Ascending aorta (tissue), 2 donors: ENCODE measurements at regions of chr10 and their contacts with region 1.

Region 1: GRCh38 chr10:46228563-46229071 is 58.2 kb upstream of the ANTXRL start:
- DNase-seq: peak in 1 of 2 donors; percentile 81
- H3K4me3 ChIP-seq: no peak overlapping the region
- H3K27ac ChIP-seq: no peak overlapping the region
- H3K4me1 ChIP-seq: no peaks in the 10 kb centered on the region
- H3K27me3 ChIP-seq: no peaks in the 10 kb centered on the region
- CTCF ChIP-seq: peak; percentile 84 to 94 (median 93)

Region 2: GRCh38 chr10:46175296-46175695 is 53.3 kb before region 1 on chr10:
- intact Hi-C with region 1: no loop called
- DNase-seq: no peak
- H3K4me3 ChIP-seq: no peak overlapping the region
- H3K27ac ChIP-seq: no peak overlapping the region
- H3K4me1 ChIP-seq: no peaks in the 10 kb centered on the region
- H3K27me3 ChIP-seq: no peaks in the 10 kb centered on the region
- CTCF ChIP-seq: no peak

Region 3: GRCh38 chr10:46325023-46325422 is 96.4 kb after region 1 on chr10:
- intact Hi-C with region 1: loop called (anchors 1 kb)
- DNase-seq: no peak
- H3K4me3 ChIP-seq: no peak overlapping the region
- H3K27ac ChIP-seq: peak overlapping the region in 1 of 2 donors; percentile 26
- H3K4me1 ChIP-seq: peaks cover 0 to 8% of the 10 kb centered on the region in 2 donors
- H3K27me3 ChIP-seq: no peaks in the 10 kb centered on the region
- CTCF ChIP-seq: peak in 1 of 3 experiments; percentile 38